K562 (cell line): ENCODE measurements at regions of chr4 and their contacts with region 1.

Region 1: GRCh38 chr4:151117371-151117962 is 18.0 kb downstream of the RPS3A start:
- DNase-seq: peak; percentile 56 to 69 (median 59)
- ATAC-seq: peak; percentile 85
- H3K4me3 ChIP-seq: no peak overlapping the region
- H3K27ac ChIP-seq: no peak overlapping the region
- H3K4me1 ChIP-seq: no peaks in the 10 kb centered on the region
- H3K27me3 ChIP-seq: no peaks in the 10 kb centered on the region; a peak in 1 of 5 replicates
- CTCF ChIP-seq: peak; percentile 57 to 87 (median 77)
- EP300 ChIP-seq: no peak
- POLR2A ChIP-seq: no peak
- RAD21 ChIP-seq: peak; percentile 71 to 78

Region 2: GRCh38 chr4:151169223-151169622 is 51.8 kb after region 1 on chr4:
- CTCF ChIA-PET with region 1: no interaction called
- POLR2A ChIA-PET with region 1: no interaction called
- in situ Hi-C with region 1: no loop called
- intact Hi-C with region 1: loop called (anchors 5 kb)
- DNase-seq: no peak
- ATAC-seq: no peak
- H3K4me3 ChIP-seq: no peak overlapping the region
- H3K27ac ChIP-seq: no peak overlapping the region
- H3K4me1 ChIP-seq: no peaks in the 10 kb centered on the region
- H3K27me3 ChIP-seq: peaks cover 4 to 11% of the 10 kb centered on the region in 2 experiments; a peak in 2 of 5 replicates
- CTCF ChIP-seq: no peak
- EP300 ChIP-seq: no peak
- POLR2A ChIP-seq: no peak
- RAD21 ChIP-seq: no peak

Region 3: GRCh38 chr4:151296227-151296626 is 178.8 kb after region 1 on chr4:
- CTCF ChIA-PET with region 1: no interaction called
- POLR2A ChIA-PET with region 1: no interaction called
- in situ Hi-C with region 1: no loop called
- intact Hi-C with region 1: no loop called
- DNase-seq: no peak
- ATAC-seq: no peak
- H3K4me3 ChIP-seq: no peak overlapping the region
- H3K27ac ChIP-seq: no peak overlapping the region
- H3K4me1 ChIP-seq: no peaks in the 10 kb centered on the region
- H3K27me3 ChIP-seq: peaks cover 5 to 6% of the 10 kb centered on the region in 2 experiments; a peak in 4 of 5 replicates
- CTCF ChIP-seq: no peak
- EP300 ChIP-seq: no peak
- POLR2A ChIP-seq: no peak
- RAD21 ChIP-seq: no peak

Region 4: DNA sequence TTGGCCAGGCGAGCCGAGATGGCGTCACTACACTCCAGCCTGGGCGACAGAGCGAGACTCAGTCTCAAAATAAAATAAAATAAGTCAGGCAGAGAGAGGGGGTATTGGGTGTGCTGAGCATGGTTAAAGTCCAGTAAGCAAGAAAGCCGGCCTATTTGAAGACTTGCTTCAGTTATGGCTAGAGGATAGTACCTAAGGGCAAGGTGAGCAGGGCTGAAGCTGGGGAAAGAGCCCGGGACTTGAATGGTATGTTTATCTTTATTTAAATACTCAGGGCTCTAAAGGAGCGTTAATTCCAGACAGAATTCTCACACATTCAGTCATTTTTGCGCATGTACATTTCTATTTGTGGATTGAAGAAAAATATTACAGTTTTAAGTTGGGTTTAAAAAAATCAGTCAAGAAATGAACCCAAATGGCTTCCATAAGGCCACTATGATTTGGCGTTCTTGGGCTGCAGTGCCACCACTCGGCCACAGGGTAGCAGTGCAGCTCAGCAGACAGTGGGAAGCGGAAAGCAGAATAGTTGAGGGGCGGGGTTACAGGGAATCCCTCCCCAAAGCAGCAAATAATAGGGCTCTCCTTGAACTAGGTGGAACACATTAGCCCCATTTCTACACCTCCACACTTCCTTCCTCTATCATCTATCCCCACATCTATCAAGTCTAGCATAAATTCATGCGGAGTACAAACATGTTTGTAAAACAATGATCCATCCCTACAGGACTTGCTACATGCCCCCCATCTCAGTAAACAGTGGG is 245.1 kb after region 1 on chr4:
- CTCF ChIA-PET with region 1: no interaction called
- POLR2A ChIA-PET with region 1: no interaction called
- in situ Hi-C with region 1: no loop called
- intact Hi-C with region 1: loop called (anchors 1 kb)
- DNase-seq: peak; percentile 83 to 85 (median 84)
- ATAC-seq: peak; percentile 100
- H3K4me3 ChIP-seq: no peak overlapping the region
- H3K27ac ChIP-seq: no peak overlapping the region
- H3K4me1 ChIP-seq: no peaks in the 10 kb centered on the region
- H3K27me3 ChIP-seq: no peaks in the 10 kb centered on the region
- CTCF ChIP-seq: peak; percentile 88 to 97 (median 93)
- EP300 ChIP-seq: no peak
- POLR2A ChIP-seq: no peak
- RAD21 ChIP-seq: peak; percentile 79 to 86

Region 5: DNA sequence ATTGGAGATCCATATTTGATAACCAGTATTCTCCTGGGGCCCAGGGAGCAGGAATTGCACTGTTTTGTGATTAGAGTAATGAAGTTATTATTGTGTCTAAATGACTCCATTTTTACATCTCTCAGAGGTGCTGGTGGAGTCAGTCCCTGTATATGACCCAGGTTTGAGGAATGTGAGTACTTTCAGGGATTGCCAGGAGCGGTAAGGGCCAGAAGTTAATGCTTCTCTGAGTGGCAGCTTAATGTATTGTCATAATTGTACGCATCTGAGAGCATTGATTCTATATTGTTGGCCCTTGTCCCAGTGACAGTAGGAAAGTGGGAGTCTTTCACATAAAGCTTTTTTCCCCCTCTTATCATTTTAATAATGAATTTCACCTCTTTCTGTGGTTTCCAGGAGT is 497.1 kb after region 1 on chr4:
- CTCF ChIA-PET with region 1: interaction called, 3 read pairs
- POLR2A ChIA-PET with region 1: interaction called, 3 read pairs
- in situ Hi-C with region 1: loop called (anchors 10 kb)
- intact Hi-C with region 1: loop called (anchors 5 kb)
- DNase-seq: no peak
- ATAC-seq: no peak
- H3K4me3 ChIP-seq: no peak overlapping the region
- H3K27ac ChIP-seq: no peak overlapping the region
- H3K4me1 ChIP-seq: no peaks in the 10 kb centered on the region
- H3K27me3 ChIP-seq: peaks cover 0 to 4% of the 10 kb centered on the region in 2 experiments; a peak in 1 of 5 replicates
- CTCF ChIP-seq: no peak
- EP300 ChIP-seq: no peak
- POLR2A ChIP-seq: no peak
- RAD21 ChIP-seq: no peak